ENCODE measurements at regions of chr10 and their contacts with region 1.

Region 1: GRCh38 chr10:59580026-59580863 is 129.4 kb downstream of the SLC16A9 start:
- DNase-seq: peak in 6 of 42 donors; percentile 12 to 58 (median 24)

Region 2: GRCh38 chr10:59234816-59235429 is 345.3 kb before region 1 on chr10:
- intact Hi-C with region 1: loop called (anchors 2 kb)
- DNase-seq: peak in 18 of 42 donors; percentile 8 to 74 (median 38)

Region 3: DNA sequence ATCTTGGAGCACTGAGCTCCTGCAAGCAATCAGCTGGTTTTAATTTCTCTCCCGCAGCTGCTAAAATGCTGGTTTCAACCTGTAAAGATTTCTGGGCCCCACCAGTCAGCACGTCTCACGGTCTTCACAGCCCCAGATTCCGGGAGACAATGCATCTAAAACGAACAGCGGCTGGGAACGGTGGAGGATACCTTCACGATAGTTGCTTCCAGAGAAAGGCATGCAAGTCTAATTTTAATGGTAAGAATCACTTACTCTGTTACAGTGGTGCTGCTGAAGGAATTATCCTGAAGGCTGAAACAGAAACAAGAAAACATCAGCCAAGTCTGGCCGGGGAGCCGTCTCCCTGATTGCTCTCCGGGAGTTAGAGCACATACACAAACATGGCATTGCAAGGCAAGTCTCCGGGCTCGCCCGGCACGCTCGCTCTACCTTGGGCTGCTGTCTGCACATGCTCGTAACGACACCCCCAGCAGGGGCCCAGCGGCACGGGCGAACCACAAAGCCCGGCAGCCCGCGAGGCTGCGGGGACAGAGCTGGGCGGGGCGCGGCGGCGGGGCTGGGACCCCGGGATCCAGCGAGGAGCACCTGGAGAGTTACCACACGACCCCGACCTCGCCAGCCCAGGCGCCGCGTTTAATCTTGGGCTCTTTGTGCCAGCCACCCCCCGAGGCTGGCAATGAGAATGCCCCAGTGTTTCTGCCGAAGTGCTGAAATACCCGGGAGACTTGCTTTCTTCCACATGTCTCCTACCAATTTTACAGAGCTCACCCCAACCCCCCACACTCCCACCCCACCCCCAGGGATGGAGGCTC is 217.9 kb before region 1 on chr10 and contains the start of gene FAM13C:
- intact Hi-C with region 1: loop called (anchors 5 kb)
- DNase-seq: peak; percentile 61 to 92 (median 81)

Region 4: DNA sequence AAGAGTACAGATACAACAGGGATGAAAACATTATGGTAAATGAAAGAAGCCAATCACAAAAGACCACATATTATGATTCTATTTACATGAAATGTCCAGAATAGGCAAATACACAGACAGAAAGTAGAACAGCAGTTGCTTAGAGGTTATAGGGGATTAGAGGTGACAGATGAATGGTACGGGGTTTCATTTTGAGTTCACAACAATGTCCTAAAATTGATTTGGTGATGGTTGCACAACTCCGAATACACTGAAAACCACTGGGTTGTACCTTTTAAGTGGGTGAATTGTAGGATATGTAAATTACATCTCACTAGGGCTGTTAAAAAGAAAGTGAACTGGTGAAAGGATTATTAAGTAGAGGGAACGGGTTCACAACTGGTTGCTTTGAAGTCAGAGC is 249.4 kb after region 1 on chr10:
- intact Hi-C with region 1: no loop called
- DNase-seq: no peak

Region 5: DNA sequence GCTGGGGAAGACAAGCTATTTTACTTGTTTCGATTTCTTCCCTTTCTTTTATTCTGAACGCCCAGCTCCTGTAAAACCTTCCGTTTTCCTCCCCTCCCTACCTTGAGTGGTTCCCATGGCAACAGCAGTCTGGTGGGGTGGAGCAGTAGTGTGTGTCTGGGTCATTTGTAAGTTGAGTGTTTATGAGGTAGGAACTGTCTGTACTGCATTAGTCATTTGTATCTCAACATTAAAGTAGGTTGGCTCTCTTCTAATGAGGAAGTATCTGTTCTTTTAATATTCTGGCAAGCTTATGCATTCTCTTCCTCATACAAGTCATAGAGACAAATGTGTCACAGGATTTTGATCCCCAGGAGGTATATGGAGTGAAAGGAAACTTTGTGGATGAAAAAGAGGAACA is 411.4 kb after region 1 on chr10:
- intact Hi-C with region 1: no loop called
- DNase-seq: peak; percentile 33 to 89 (median 66)